Calu3 (cell line): ENCODE measurements at regions of chr7 and their contacts with region 1.

Region 1: DNA sequence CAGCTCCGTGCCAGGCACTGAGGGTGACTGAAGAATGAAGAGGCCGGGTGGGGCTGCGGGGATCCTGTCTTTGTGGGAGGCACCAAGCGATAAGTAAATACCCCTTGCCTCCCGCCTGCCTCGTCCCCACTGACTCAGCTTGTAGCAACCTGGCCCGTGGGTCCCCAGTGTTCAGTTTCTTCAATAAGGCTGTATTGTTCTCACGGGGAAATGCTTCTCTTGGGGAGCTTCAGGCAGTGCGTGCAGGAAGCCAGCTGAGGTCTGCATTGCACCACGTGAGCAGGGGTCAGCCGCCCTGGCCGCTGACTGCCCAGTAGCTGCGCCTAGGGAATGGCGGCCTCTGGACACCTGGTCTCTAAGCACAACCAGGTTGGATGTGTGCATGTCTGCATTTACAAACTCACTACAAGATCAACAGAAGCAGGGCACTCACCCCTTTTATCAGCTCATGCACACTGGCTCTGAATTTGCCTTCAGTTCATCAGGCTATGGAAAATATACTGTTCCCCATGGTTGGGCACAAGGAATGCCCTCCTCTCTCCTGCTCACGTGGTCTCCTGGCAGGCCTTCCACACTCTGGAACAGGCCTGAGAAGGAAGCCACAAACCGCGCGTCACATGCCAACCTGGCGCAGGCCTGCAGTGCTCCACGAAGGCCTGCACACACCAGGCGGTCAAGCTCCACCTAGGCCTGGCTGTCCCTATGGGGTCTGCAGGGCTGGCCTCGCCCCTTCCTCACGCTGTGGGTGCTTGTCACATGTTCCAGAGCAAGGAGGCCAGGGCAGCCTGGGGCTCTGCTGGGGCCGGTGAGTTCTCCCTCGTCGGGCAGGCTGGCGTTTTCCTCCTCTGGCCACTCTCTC is 135.7 kb upstream of the RNF32 start:
- DNase-seq: no peak
- H3K4me3 Mint-ChIP-seq: no peak overlapping the region
- H3K27ac Mint-ChIP-seq: no peak overlapping the region
- H3K4me1 Mint-ChIP-seq: no peaks in the 10 kb centered on the region
- H3K27me3 Mint-ChIP-seq: peaks cover 37% of the 10 kb centered on the region
- CTCF ChIP-seq: no peak

Region 2: DNA sequence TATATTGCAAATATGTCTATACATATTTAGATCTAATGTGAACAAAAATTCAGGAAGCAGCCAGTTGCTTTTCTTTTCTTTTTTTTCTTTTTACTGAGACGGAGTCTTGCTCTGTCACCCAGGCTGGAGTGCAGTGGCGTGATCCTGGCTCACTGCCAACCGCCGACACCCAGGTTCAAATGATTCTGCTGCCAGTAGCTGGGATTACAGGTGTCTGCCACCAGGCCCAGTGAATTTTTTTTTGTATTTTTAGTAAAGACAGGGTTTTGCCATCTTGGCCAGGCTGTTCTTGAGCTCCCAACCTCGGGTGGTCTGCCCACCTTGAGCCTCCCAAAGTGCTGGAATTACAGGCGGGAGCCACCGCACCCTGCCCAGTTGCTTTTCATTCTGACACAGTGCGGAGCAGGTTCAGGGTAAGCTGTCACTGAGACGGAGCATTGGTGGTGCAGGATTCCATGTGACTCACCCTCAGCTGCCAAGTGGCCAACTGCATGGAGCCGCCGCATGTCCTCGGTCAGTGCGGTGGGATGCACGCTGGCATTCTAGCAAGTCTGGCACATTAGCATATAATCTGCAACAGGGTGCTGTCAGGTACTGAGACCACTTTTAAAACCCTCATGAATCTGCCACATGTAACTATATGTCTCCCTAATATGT is 1194.6 kb after region 1 on chr7:
- CTCF ChIA-PET with region 1: no interaction called
- intact Hi-C with region 1: loop called (anchors 5 kb)
- DNase-seq: no peak
- H3K4me3 Mint-ChIP-seq: no peak overlapping the region
- H3K27ac Mint-ChIP-seq: no peak overlapping the region
- H3K4me1 Mint-ChIP-seq: no peaks in the 10 kb centered on the region
- H3K27me3 Mint-ChIP-seq: peaks cover 36% of the 10 kb centered on the region
- CTCF ChIP-seq: no peak